ENCODE measurements at regions of chr6 and their contacts with region 1.

Region 1: DNA sequence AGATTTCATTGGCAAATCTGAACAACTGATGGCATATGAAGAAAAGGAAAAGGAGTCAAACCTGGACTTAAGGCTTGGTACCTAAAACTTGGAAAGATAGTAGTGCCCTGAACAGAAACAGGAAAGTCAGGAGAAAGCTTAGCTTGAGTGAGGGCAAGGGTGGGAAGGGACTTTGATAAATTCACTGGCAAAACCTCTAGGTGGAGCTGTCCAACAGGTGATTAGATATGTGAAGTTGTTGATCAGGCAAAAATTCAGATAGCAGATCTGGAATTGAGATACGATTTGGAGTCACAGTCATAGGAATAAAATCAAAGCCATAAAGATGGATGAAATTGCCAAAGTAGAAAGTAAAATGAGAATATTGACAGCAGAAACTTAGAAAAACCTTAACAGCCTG is 16.1 kb upstream of the ZNF292 start:
- DNase-seq: peak; percentile 54
- ATAC-seq: peak; percentile 88
- H3K4me3 ChIP-seq: no peak overlapping the region
- H3K27ac ChIP-seq: no peak overlapping the region
- H3K4me1 ChIP-seq: no peaks in the 10 kb centered on the region
- H3K27me3 ChIP-seq: 0 out of 2 replicates have a peak, but pooled peaks cover 4% of the 10 kb centered on the region
- CTCF ChIP-seq: peak; percentile 62 to 84 (median 69); a peak in 5 of 6 replicates
- POLR2A ChIP-seq: no peak
- RAD21 ChIP-seq: peak; percentile 87

Region 2: GRCh38 chr6:87174078-87174579 is 34.9 kb after region 1 on chr6:
- CTCF ChIA-PET with region 1: no interaction called
- POLR2A ChIA-PET with region 1: no interaction called
- RAD21 ChIA-PET with region 1: no interaction called
- intact Hi-C with region 1: no loop called
- DNase-seq: no peak
- ATAC-seq: no peak
- H3K4me3 ChIP-seq: no peak overlapping the region
- H3K27ac ChIP-seq: no peak overlapping the region
- H3K4me1 ChIP-seq: no peaks in the 10 kb centered on the region
- H3K27me3 ChIP-seq: no peaks in the 10 kb centered on the region
- CTCF ChIP-seq: no peak
- POLR2A ChIP-seq: no peak
- RAD21 ChIP-seq: no peak

Region 3: GRCh38 chr6:87237804-87238203 is 98.6 kb after region 1 on chr6:
- CTCF ChIA-PET with region 1: interaction called, 3 read pairs
- POLR2A ChIA-PET with region 1: no interaction called
- RAD21 ChIA-PET with region 1: no interaction called
- intact Hi-C with region 1: loop called (anchors 1 kb)
- DNase-seq: peak; percentile 18
- ATAC-seq: peak; percentile 77
- H3K4me3 ChIP-seq: no peak overlapping the region
- H3K27ac ChIP-seq: no peak overlapping the region
- H3K4me1 ChIP-seq: no peaks in the 10 kb centered on the region
- H3K27me3 ChIP-seq: no peaks in the 10 kb centered on the region
- CTCF ChIP-seq: peak; percentile 23 to 64 (median 50); a peak in 5 of 6 replicates
- POLR2A ChIP-seq: no peak
- RAD21 ChIP-seq: peak; percentile 40; the same call in 1 of the 2 replicates

Region 4: GRCh38 chr6:87261534-87261933 is 122.3 kb after region 1 on chr6:
- CTCF ChIA-PET with region 1: no interaction called
- POLR2A ChIA-PET with region 1: no interaction called
- RAD21 ChIA-PET with region 1: no interaction called
- intact Hi-C with region 1: loop called (anchors 10 kb)
- DNase-seq: no peak
- ATAC-seq: no peak
- H3K4me3 ChIP-seq: no peak overlapping the region
- H3K27ac ChIP-seq: no peak overlapping the region
- H3K4me1 ChIP-seq: no peaks in the 10 kb centered on the region
- H3K27me3 ChIP-seq: no peaks in the 10 kb centered on the region
- CTCF ChIP-seq: no peak
- POLR2A ChIP-seq: no peak
- RAD21 ChIP-seq: no peak

Region 5: DNA sequence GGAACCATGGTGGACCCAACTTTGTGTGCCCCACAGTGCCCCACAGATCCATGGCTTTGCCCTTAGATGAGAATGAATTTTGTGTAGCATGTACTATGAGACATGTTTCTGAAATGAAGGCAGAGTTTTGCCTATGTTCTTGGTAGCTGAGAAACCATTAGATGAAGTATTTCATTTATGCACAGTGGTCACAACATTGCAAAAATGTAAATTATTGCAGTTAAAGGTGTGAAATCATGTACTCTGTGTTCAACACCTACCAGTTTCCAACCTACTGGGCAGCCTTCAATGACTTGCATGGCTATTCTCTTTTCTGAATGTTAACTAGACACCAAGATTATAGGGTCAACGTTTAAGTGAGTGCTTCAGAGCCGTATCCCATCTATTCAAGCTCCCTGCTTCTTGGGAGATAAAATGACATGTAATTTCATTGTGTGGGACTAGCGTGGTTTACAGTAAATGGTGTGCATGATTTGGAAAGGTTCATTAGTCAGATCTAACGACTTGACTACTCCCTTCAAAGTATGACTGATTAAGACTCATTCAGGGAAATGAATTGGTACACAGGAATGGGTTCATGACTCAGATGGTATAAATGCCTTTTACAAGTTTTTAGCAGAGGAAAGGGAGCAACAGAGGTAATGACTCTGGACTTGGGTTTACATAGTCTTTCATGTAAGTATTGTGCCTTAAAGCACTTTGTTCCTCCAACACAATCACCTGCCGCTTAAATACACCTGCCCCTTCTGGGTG is 668.9 kb after region 1 on chr6:
- CTCF ChIA-PET with region 1: no interaction called
- POLR2A ChIA-PET with region 1: no interaction called
- RAD21 ChIA-PET with region 1: no interaction called
- intact Hi-C with region 1: no loop called
- DNase-seq: no peak
- ATAC-seq: no peak
- H3K4me3 ChIP-seq: no peak overlapping the region
- H3K27ac ChIP-seq: no peak overlapping the region
- H3K4me1 ChIP-seq: peaks cover 0 to 8% of the 10 kb centered on the region in 2 experiments; a peak in 1 of 4 replicates
- H3K27me3 ChIP-seq: 0 out of 2 replicates have a peak, but pooled peaks cover 10% of the 10 kb centered on the region
- CTCF ChIP-seq: no peak
- POLR2A ChIP-seq: no peak
- RAD21 ChIP-seq: no peak

Region 6: DNA sequence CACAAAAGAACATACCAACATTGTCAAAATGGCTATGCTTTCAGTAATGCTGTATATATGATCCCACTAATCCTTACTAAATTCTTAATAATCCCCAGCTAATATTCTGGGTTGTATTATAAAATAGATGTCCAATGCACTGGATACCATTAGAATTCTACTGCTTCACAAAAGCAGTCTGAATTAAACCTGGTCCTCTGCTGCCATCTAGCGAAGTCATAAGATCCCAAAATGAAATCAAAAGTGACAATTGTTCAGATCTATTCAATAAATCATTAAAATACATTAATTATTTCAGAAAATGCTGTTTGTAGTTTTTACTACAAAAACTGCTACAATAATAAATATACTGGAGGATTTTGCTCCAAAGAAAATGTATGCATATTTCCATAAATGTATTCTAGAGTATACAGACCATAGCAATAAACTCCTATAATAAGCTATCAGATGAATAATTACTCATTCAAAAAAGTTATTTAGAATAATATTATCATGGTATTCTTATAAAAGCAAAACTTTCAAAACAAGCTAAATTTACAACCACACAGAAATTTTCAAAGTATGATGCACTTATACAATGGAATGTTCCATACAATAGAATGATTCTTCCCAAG is 1731.6 kb after region 1 on chr6:
- CTCF ChIA-PET with region 1: interaction called, 3 read pairs
- POLR2A ChIA-PET with region 1: no interaction called
- RAD21 ChIA-PET with region 1: no interaction called
- intact Hi-C with region 1: loop called (anchors 10 kb)
- DNase-seq: peak; percentile 29
- ATAC-seq: peak; percentile 54; the same call in 1 of the 2 replicates
- H3K4me3 ChIP-seq: no peak overlapping the region
- H3K27ac ChIP-seq: no peak overlapping the region
- H3K4me1 ChIP-seq: peaks cover 0 to 8% of the 10 kb centered on the region in 2 experiments; a peak in 2 of 4 replicates
- H3K27me3 ChIP-seq: no peaks in the 10 kb centered on the region
- CTCF ChIP-seq: peak; percentile 33 to 68 (median 43); a peak in 3 of 6 replicates
- POLR2A ChIP-seq: no peak
- RAD21 ChIP-seq: peak; percentile 74

Measured in HCT116 (cell line).